Activated CD4-positive, alpha-beta T cell treated with anti-CD3 and anti-CD28 coated beads for 36 hours (primary cell): ENCODE measurements at regions of chr1 and their contacts with region 1.

Region 1: DNA sequence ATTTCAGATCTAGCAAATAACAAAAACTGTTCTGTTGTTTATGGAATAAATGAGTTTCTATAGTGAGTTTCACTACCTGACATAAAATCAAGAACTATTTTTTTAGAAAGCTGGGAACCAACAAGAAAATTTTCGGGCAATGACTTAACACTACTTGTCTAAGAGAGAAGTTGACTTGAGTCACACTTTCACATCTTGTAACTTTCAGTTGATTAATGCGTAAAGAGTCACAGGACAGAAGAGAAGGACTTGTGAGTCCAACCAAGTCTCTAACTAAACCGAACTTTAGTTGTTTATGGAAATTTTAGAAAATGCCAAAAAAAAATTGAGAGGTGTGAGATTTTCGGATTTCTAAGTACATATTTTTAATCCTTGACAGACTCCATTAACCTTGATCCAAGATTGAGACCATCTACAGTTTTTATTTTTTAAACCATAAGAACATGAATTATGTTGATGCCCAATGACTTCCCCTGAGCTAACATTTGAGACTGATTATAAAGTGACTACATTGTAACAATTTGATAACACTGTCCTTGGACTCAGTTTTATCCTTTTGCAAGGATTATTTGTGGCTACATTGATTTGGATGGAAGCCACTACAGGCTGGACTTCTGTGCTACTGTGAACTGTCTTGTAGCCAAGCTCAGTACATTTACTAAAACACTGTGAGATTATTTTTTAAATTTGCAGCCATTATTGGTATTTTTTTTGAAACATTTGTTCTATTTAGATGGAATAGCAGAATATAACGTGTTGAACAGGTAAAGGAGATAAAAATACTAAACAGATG is 284.0 kb downstream of the PTPRC start:
- DNase-seq: no peak
- ATAC-seq: peak; percentile 56
- H3K4me3 Mint-ChIP-seq: no peak overlapping the region
- H3K27ac Mint-ChIP-seq: peak overlapping the region; percentile 76
- H3K4me1 Mint-ChIP-seq: peaks cover 74% of the 10 kb centered on the region
- H3K27me3 Mint-ChIP-seq: no peaks in the 10 kb centered on the region

Region 2: DNA sequence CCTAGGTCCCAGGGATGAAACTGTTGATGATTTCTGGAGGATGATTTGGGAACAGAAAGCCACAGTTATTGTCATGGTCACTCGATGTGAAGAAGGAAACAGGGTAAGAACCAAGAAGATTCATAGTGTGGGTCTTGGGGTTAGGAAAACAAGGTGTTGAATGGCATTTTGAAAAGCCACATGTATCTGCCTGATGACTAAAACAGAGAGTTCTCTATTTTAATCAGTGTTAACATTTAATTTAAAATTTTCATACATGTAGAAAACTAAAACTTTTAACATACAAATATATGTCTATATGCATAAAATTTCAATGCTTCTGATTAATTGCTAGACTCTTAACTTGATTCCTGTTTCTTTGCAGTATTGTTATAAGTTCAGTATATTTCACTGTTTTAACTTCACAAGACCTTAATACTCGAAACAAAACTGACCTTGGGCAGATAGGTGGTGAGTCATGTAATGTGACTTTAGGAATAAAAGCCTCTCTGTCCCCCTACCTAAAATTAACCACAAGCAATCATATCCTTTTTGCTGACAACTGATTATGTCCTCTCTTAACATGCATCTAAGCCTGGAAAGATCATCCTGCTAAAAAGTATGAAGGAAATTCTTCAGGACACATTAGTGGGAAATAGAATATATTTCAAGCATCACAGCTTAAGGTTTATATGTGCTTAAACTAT is 188.4 kb before region 1 on chr1:
- CTCF ChIA-PET with region 1: no interaction called
- POLR2A ChIA-PET with region 1: no interaction called
- intact Hi-C with region 1: loop called (anchors 5 kb)
- DNase-seq: no peak
- ATAC-seq: peak; percentile 85
- H3K4me3 Mint-ChIP-seq: peak overlapping the region; percentile 1
- H3K27ac Mint-ChIP-seq: peak overlapping the region; percentile 42
- H3K4me1 Mint-ChIP-seq: peaks cover 73% of the 10 kb centered on the region
- H3K27me3 Mint-ChIP-seq: no peaks in the 10 kb centered on the region

Region 3: GRCh38 chr1:198880818-198881597 is 41.8 kb before region 1 on chr1:
- CTCF ChIA-PET with region 1: interaction called, 4 read pairs
- POLR2A ChIA-PET with region 1: interaction called, 3 read pairs
- intact Hi-C with region 1: loop called in 1 of 2 experiments (anchors 5 kb)
- DNase-seq: peak; percentile 14
- ATAC-seq: peak; percentile 93
- H3K4me3 Mint-ChIP-seq: no peak overlapping the region
- H3K27ac Mint-ChIP-seq: peak overlapping the region; percentile 86
- H3K4me1 Mint-ChIP-seq: peaks cover 28% of the 10 kb centered on the region
- H3K27me3 Mint-ChIP-seq: no peaks in the 10 kb centered on the region

Region 4: DNA sequence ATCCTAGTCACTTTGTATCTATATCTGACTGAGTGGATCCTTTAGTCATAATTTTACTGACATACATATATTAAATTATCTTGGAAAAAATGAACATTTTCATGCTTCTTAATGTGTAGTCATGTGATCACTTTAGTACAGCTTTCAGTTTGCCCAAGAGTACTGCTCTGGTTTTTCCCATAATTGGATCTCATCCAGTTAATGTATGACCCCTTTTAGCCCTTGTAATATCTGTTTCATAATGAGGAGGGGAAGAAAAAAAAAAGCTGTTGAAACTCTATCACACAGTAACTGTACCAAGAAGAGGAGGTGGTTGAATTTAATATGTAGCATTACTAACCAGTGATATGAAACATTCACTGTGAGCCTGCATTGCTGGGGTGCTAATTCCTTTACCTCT is 44.7 kb after region 1 on chr1:
- CTCF ChIA-PET with region 1: no interaction called
- POLR2A ChIA-PET with region 1: no interaction called
- intact Hi-C with region 1: no loop called
- DNase-seq: no peak
- ATAC-seq: peak; percentile 57
- H3K4me3 Mint-ChIP-seq: no peak overlapping the region
- H3K27ac Mint-ChIP-seq: peak overlapping the region; percentile 56
- H3K4me1 Mint-ChIP-seq: peaks cover 28% of the 10 kb centered on the region
- H3K27me3 Mint-ChIP-seq: no peaks in the 10 kb centered on the region

Region 5: DNA sequence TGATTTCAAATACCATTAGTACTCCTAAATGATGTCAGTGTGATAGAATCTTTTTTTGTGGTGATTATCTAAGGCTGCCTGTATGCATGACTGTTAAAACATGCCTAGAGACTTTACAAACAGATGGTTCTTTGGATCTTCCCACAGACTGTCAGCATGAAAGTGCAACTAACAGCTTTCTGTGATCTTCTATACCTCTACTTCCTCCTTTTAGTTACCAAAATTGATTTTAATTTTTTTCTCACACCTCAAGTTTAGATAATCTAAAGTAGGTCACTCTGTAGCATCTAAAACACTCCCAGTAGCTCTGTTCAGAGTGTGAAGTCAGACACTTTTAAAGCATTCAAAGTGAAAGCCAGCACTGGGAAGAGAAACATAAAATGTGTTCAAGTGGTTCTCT is 250.5 kb after region 1 on chr1:
- CTCF ChIA-PET with region 1: no interaction called
- POLR2A ChIA-PET with region 1: no interaction called
- intact Hi-C with region 1: loop called (anchors 1 to 5 kb)
- DNase-seq: peak; percentile 11
- ATAC-seq: peak; percentile 89
- H3K4me3 Mint-ChIP-seq: no peak overlapping the region
- H3K27ac Mint-ChIP-seq: peak overlapping the region; percentile 39
- H3K4me1 Mint-ChIP-seq: peaks cover 58% of the 10 kb centered on the region
- H3K27me3 Mint-ChIP-seq: peaks cover 3% of the 10 kb centered on the region

Region 6: GRCh38 chr1:199226163-199226562 is 303.3 kb after region 1 on chr1:
- CTCF ChIA-PET with region 1: interaction called, 3 read pairs
- POLR2A ChIA-PET with region 1: no interaction called
- intact Hi-C with region 1: loop called (anchors 5 kb)
- DNase-seq: peak; percentile 53
- ATAC-seq: peak; percentile 98
- H3K4me3 Mint-ChIP-seq: peak overlapping the region; percentile 47
- H3K27ac Mint-ChIP-seq: peak overlapping the region; percentile 78
- H3K4me1 Mint-ChIP-seq: peaks cover 25% of the 10 kb centered on the region
- H3K27me3 Mint-ChIP-seq: no peaks in the 10 kb centered on the region

Region 7: DNA sequence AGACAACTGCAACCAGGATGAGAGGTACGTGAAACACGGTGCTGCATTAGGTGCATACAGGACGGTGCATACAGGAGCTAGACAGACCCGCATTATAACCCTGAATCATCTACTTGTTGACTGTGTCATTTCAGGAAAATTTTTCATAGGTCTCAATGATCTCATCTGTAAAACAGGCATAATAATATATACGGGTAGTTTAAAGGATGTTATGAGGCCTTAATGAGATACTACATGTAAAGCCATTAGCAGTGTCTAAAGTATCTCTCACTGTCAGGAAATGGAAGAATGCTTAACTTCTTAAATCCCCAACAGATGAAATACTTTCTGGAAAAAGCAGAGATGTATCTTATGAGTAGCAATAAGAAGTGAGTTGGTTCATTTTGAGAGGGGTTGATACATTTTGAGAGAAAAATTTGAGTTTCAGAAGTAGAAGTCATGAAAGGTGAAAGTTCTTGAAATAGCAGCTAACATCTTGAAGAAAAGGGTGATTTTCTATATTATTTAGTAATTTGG is 385.6 kb after region 1 on chr1:
- CTCF ChIA-PET with region 1: no interaction called
- POLR2A ChIA-PET with region 1: no interaction called
- intact Hi-C with region 1: loop called (anchors 2 to 5 kb)
- DNase-seq: peak; percentile 5
- ATAC-seq: peak; percentile 93
- H3K4me3 Mint-ChIP-seq: no peak overlapping the region
- H3K27ac Mint-ChIP-seq: peak overlapping the region; percentile 69
- H3K4me1 Mint-ChIP-seq: peaks cover 44% of the 10 kb centered on the region
- H3K27me3 Mint-ChIP-seq: peaks cover 25% of the 10 kb centered on the region